ENCODE measurements at regions of chr10 and their contacts with region 1.

Region 1: DNA sequence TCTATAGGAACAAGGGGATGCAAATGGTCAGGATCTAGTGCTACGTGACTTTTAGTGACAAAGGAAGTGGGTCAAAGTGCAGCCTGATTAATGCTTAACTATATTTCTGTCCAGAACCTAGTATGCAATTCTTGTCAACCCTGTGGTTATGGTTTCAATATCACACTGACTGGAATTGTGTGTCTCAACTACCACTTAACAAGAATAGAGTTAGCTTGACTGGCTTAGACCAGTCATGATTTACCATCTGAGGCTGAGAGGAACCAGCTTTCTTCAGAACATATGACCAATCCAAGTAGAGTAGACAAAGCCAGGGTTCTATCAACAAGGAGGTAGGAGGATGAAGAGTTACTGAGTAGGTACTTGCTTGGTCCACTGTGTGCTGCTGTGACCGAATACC is 54.4 kb downstream of the MYPN start:
- DNase-seq: no peak

Region 2: DNA sequence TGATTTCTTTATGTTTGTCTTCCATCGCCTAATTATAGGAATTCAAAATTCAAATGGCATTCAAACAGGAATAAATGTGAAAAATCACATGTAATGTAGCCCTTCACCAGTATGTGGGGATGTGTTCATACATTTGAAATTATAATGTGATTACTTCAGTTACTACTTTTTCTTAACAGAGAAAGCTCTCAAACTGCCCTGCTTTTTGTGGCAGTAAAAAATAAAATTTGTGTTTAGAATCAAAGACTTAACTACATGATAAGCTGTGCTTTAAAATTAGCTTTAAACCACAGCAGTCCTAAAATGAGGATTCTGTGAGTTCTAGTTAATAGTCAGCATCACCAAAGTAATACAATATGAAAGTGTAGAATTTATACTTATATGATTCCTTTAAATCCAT is 80.9 kb before region 1 on chr10:
- intact Hi-C with region 1: loop called in 1 of 2 experiments (anchors 10 kb)
- DNase-seq: no peak

Measured in posterior vena cava (tissue), 2 donors.